A549 (cell line): ENCODE measurements at regions of chr12 and their contacts with region 1.

Region 1: GRCh38 chr12:4276524-4277204 is 3.1 kb downstream of the CCND2 start:
- DNase-seq: peak; percentile 76 to 84
- ATAC-seq: peak; percentile 58 to 84
- H3K4me3 ChIP-seq: no peak overlapping the region
- H3K27ac ChIP-seq: no peak overlapping the region
- H3K4me1 ChIP-seq: peaks cover 40% of the 10 kb centered on the region
- CTCF ChIP-seq: peak; percentile 88
- EP300 ChIP-seq: no peak
- POLR2A ChIP-seq: no peak
- RAD21 ChIP-seq: peak; percentile 90 to 96

Region 2: GRCh38 chr12:3885277-3886094 is 391.2 kb before region 1 on chr12:
- CTCF ChIA-PET with region 1: interaction called, 235 read pairs
- POLR2A ChIA-PET with region 1: interaction called, 6 read pairs
- DNase-seq: peak; percentile 17 to 40
- ATAC-seq: peak in 1 of 2 experiments; percentile 42; a peak in 1 of 6 replicates
- H3K4me3 ChIP-seq: no peak overlapping the region
- H3K27ac ChIP-seq: no peak overlapping the region
- H3K4me1 ChIP-seq: no peaks in the 10 kb centered on the region
- CTCF ChIP-seq: peak; percentile 89
- EP300 ChIP-seq: no peak
- POLR2A ChIP-seq: no peak
- RAD21 ChIP-seq: peak; percentile 84 to 89

Region 3: GRCh38 chr12:3988519-3989448 is 287.9 kb before region 1 on chr12:
- CTCF ChIA-PET with region 1: interaction called, 74 read pairs
- POLR2A ChIA-PET with region 1: interaction called, 4 read pairs
- DNase-seq: no peak
- ATAC-seq: no peak
- H3K4me3 ChIP-seq: no peak overlapping the region
- H3K27ac ChIP-seq: no peak overlapping the region
- H3K4me1 ChIP-seq: no peaks in the 10 kb centered on the region
- CTCF ChIP-seq: no peak
- EP300 ChIP-seq: no peak
- POLR2A ChIP-seq: no peak
- RAD21 ChIP-seq: no peak

Region 4: GRCh38 chr12:4030929-4031702 is 245.5 kb before region 1 on chr12:
- CTCF ChIA-PET with region 1: interaction called, 77 read pairs
- POLR2A ChIA-PET with region 1: no interaction called
- DNase-seq: peak; percentile 95 to 96
- ATAC-seq: peak; percentile 98 to 99
- H3K4me3 ChIP-seq: peak overlapping the region; percentile 35
- H3K27ac ChIP-seq: peak overlapping the region; percentile 78 to 93
- H3K4me1 ChIP-seq: peaks cover 21% of the 10 kb centered on the region
- CTCF ChIP-seq: no peak
- EP300 ChIP-seq: peak; percentile 34 to 56; a peak in 2 of 5 replicates
- POLR2A ChIP-seq: peak; percentile 28; the same call in 1 of the 2 replicates
- RAD21 ChIP-seq: no peak

Region 5: GRCh38 chr12:4107436-4107878 is 169.2 kb before region 1 on chr12:
- CTCF ChIA-PET with region 1: interaction called, 15 read pairs
- POLR2A ChIA-PET with region 1: no interaction called
- DNase-seq: peak; percentile 27 to 51
- ATAC-seq: peak; percentile 66 to 90; a peak in 4 of 6 replicates
- H3K4me3 ChIP-seq: no peak overlapping the region
- H3K27ac ChIP-seq: no peak overlapping the region
- H3K4me1 ChIP-seq: no peaks in the 10 kb centered on the region
- CTCF ChIP-seq: peak; percentile 31; the same call in 2 of the 3 replicates
- EP300 ChIP-seq: no peak
- POLR2A ChIP-seq: no peak
- RAD21 ChIP-seq: peak in 1 of 2 experiments; percentile 43; a peak in 2 of 5 replicates

Region 6: DNA sequence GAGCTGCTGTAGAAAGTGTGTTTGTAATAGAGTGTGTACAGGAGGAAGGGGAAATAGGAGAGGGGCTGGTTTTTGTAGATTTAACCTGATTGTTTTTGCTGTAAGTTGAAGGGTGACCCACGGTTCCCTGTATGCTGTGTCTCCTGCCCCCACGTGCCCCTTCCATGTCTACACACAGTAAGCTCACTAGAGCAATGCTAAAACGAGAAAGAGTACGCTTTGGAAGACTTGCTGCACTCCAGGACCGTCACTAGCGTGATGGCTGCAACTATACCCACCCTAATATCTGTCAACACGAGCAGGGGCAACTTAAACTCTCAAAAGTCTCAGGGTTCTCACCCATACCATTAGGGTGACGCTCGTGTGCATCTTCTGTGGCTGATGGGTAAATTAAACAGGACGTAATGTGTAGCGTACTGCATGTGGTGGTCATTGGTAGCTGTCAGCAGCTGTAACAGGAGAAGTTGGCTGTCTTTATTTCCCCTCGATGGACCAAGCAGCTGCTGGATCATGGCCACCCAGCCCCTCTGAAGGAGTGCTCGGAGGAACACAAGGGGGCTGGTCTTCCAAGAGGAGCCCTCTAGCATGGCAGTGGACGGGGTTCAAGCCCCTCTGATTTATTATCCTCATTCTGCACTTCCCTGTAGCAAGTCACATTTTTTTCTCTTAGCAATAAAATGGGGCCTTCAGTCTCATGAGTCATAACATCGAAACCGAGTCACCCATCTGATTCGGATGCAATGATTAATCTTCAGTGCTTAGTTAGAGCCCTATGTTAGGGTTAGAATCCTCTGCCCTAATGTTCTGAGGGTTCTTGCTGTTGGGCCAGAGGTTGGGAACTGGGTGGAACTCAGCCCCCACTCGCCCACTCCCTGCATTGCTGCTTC is 10.9 kb after region 1 on chr12:
- CTCF ChIA-PET with region 1: interaction called, 62 read pairs
- POLR2A ChIA-PET with region 1: no interaction called
- DNase-seq: no peak
- ATAC-seq: no peak
- H3K4me3 ChIP-seq: no peak overlapping the region
- H3K27ac ChIP-seq: no peak overlapping the region
- H3K4me1 ChIP-seq: no peaks in the 10 kb centered on the region
- CTCF ChIP-seq: no peak
- EP300 ChIP-seq: no peak
- POLR2A ChIP-seq: no peak
- RAD21 ChIP-seq: no peak

Region 7: DNA sequence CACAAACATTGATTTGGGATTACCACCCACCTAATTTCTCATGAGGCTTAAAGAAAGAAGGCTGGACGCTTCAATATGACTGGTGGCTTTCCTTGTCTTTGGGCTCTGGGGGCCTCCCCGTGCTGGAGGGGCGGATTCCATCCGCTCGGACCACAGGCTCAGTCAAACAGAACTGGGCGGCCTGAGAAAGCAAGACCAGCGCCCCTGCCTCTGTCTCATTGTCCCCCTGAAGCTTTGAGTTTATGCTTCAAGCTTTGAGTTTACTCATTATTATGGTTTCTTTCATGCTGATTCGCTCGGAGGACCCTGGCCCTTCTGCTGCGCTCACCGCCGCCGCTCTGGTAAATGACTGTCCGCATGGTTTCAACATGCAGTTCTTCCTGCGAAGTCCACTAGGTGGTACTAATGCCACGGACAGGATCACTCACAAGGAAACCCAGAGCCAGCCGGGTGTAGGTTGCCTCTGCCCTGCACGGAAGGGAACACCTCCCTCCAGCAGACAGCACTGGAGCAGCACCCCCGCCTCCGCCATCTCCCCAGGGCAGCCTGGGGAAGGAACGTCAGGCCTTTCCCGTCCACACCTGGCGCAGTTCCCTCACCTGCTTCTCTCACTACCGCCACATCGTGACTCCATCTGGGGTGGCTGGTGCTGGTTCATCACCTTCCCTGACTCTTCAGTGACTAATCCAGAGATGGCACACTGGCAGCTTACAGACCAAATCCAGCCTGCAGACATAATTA is 31.1 kb after region 1 on chr12:
- CTCF ChIA-PET with region 1: interaction called, 12 read pairs
- POLR2A ChIA-PET with region 1: no interaction called
- DNase-seq: peak; percentile 87 to 93
- ATAC-seq: peak; percentile 97 to 99
- H3K4me3 ChIP-seq: no peak overlapping the region; the same call in 2 of the 3 replicates
- H3K27ac ChIP-seq: no peak overlapping the region
- H3K4me1 ChIP-seq: no peaks in the 10 kb centered on the region
- CTCF ChIP-seq: peak; percentile 72
- EP300 ChIP-seq: no peak
- POLR2A ChIP-seq: no peak
- RAD21 ChIP-seq: peak; percentile 84 to 90